Vagina (tissue), 2 donors: ENCODE measurements at regions of chr7 and their contacts with region 1.

Region 1: GRCh38 chr7:130481898-130482297 is 10.0 kb upstream of the MEST start:
- DNase-seq: no peak
- H3K4me3 ChIP-seq: no peak overlapping the region
- H3K27ac ChIP-seq: no peak overlapping the region
- H3K4me1 ChIP-seq: peaks cover 9% of the 10 kb centered on the region
- H3K27me3 ChIP-seq: no peaks in the 10 kb centered on the region
- CTCF ChIP-seq: no peak
- POLR2A ChIP-seq: no peak

Region 2: DNA sequence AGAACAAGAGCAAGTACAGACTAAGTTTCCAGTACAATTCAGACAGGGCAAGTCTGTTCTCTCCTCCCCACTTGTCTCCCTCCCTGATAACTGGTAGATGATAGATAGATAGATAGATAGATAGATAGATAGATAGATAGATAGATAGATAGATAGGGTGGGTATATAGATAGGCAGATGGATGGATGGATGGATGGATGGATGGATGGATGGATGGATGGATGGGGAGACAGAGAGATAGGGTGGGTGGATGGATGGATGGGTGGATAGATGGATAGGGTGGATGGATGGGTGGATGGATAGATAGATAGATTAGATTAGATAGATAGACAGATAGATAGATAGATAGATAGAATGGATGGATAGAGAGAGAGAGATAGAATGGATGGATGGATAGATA is 693.0 kb after region 1 on chr7:
- intact Hi-C with region 1: loop called (anchors 5 kb)
- DNase-seq: no peak
- H3K4me3 ChIP-seq: no peak overlapping the region
- H3K27ac ChIP-seq: no peak overlapping the region
- H3K4me1 ChIP-seq: no peaks in the 10 kb centered on the region
- H3K27me3 ChIP-seq: no peaks in the 10 kb centered on the region
- CTCF ChIP-seq: no peak
- POLR2A ChIP-seq: no peak